PC-9 (cell line): ENCODE measurements at regions of chr1 and their contacts with region 1.

Region 1: DNA sequence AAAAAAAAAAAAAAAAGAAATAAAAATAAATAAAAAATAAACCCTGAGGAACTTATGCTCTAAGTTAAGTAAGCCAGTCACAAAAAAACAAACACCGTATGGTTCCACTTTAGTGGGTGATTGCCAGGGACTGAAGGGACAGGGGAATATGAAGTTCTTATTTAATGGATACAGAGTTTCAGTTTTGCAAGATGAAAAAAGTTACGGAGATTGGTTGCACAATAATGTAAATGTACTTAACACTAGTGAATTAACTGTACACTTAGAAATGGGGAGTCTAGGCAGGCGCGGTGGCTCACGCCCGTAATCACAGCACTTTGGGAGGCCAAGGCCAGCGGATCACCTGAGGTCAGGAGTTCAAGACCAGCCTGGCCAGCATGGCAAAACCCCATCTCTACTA is 111.4 kb downstream of the ASH1L start:
- DNase-seq: no peak
- H3K4me3 ChIP-seq: no peak overlapping the region
- H3K27ac ChIP-seq: no peak overlapping the region
- H3K4me1 ChIP-seq: no peaks in the 10 kb centered on the region
- H3K27me3 ChIP-seq: no peaks in the 10 kb centered on the region
- CTCF ChIP-seq: no peak

Region 2: GRCh38 chr1:156276966-156277381 is 825.8 kb after region 1 on chr1:
- CTCF ChIA-PET with region 1: no interaction called
- POLR2A ChIA-PET with region 1: interaction called, 15 read pairs
- intact Hi-C with region 1: no loop called
- DNase-seq: no peak
- H3K4me3 ChIP-seq: no peak overlapping the region
- H3K27ac ChIP-seq: no peak overlapping the region
- H3K4me1 ChIP-seq: peaks cover 10% of the 10 kb centered on the region
- H3K27me3 ChIP-seq: no peaks in the 10 kb centered on the region
- CTCF ChIP-seq: no peak